CD4-positive, alpha-beta memory T cell (primary cell): ENCODE measurements at regions of chr1 and their contacts with region 1.

Region 1: DNA sequence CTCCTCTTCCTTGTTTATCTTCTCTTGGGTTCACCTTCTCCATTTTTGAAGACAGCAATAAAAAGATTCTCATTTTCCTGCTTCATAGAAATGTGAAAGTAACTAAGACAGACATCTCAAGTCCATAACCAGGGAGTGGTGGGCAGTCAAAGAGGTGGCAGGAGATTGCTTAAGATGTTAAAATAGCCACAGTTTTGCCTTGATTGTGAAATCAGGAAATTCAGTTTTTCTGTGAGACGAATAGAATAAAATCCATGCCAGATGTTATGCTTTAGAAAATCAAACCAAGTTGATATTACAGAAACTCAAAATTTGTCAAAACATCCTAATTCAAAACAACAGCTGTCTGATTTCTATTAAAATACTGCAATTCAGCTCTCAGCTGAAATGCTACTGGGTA is 57.2 kb downstream of the TNN start:
- DNase-seq: no peak
- H3K4me3 ChIP-seq: no peak overlapping the region
- H3K4me3 Mint-ChIP-seq: no peak overlapping the region
- H3K27ac ChIP-seq: no peak overlapping the region
- H3K27ac Mint-ChIP-seq: no peak overlapping the region
- H3K4me1 ChIP-seq: no peaks in the 10 kb centered on the region
- H3K4me1 Mint-ChIP-seq: no peaks in the 10 kb centered on the region
- H3K27me3 ChIP-seq: no peaks in the 10 kb centered on the region
- H3K27me3 Mint-ChIP-seq: peaks cover 0 to 2% of the 10 kb centered on the region in 2 donors

Region 2: GRCh38 chr1:174726167-174726879 is 398.5 kb before region 1 on chr1:
- CTCF ChIA-PET with region 1: no interaction called
- POLR2A ChIA-PET with region 1: no interaction called
- intact Hi-C with region 1: no loop called
- DNase-seq: peak in 1 of 5 donors; percentile 3
- H3K4me3 ChIP-seq: no peak overlapping the region
- H3K4me3 Mint-ChIP-seq: no peak overlapping the region
- H3K27ac ChIP-seq: no peak overlapping the region
- H3K27ac Mint-ChIP-seq: peak overlapping the region in 1 of 7 donors; percentile 57
- H3K4me1 ChIP-seq: no peaks in the 10 kb centered on the region
- H3K4me1 Mint-ChIP-seq: peaks cover 0 to 5% (median 0%) of the 10 kb centered on the region in 4 donors
- H3K27me3 ChIP-seq: no peaks in the 10 kb centered on the region
- H3K27me3 Mint-ChIP-seq: no peaks in the 10 kb centered on the region

Region 3: GRCh38 chr1:175023043-175023921 is 101.6 kb before region 1 on chr1 and contains the start of gene MRPS14:
- CTCF ChIA-PET with region 1: interaction called, 10 read pairs
- POLR2A ChIA-PET with region 1: interaction called, 3 read pairs
- intact Hi-C with region 1: no loop called
- DNase-seq: peak; percentile 95 to 98 (median 97)
- H3K4me3 ChIP-seq: peak within 1 kb of the TSS; percentile 79 to 97
- H3K4me3 Mint-ChIP-seq: peak within 1 kb of the TSS; percentile 90 to 98 (median 93)
- H3K27ac ChIP-seq: peak within 1 kb of the TSS; percentile 94
- H3K27ac Mint-ChIP-seq: peak within 1 kb of the TSS; percentile 86 to 97 (median 97)
- H3K4me1 ChIP-seq: peaks cover 25% of the 10 kb centered on the region
- H3K4me1 Mint-ChIP-seq: peaks cover 24 to 43% (median 28%) of the 10 kb centered on the region in 4 donors
- H3K27me3 ChIP-seq: no peaks in the 10 kb centered on the region
- H3K27me3 Mint-ChIP-seq: no peaks in the 10 kb centered on the region
- total RNA-seq, gene MRPS14: 39.3 to 40.6 TPM

Region 4: GRCh38 chr1:175035865-175036264 is 89.0 kb before region 1 on chr1:
- CTCF ChIA-PET with region 1: interaction called, 35 read pairs
- POLR2A ChIA-PET with region 1: interaction called, 5 read pairs
- intact Hi-C with region 1: no loop called
- DNase-seq: no peak
- H3K4me3 ChIP-seq: no peak overlapping the region
- H3K4me3 Mint-ChIP-seq: no peak overlapping the region
- H3K27ac ChIP-seq: no peak overlapping the region
- H3K27ac Mint-ChIP-seq: no peak overlapping the region
- H3K4me1 ChIP-seq: no peaks in the 10 kb centered on the region
- H3K4me1 Mint-ChIP-seq: no peaks in the 10 kb centered on the region
- H3K27me3 ChIP-seq: no peaks in the 10 kb centered on the region
- H3K27me3 Mint-ChIP-seq: peaks cover 0 to 2% of the 10 kb centered on the region in 2 donors

Region 5: DNA sequence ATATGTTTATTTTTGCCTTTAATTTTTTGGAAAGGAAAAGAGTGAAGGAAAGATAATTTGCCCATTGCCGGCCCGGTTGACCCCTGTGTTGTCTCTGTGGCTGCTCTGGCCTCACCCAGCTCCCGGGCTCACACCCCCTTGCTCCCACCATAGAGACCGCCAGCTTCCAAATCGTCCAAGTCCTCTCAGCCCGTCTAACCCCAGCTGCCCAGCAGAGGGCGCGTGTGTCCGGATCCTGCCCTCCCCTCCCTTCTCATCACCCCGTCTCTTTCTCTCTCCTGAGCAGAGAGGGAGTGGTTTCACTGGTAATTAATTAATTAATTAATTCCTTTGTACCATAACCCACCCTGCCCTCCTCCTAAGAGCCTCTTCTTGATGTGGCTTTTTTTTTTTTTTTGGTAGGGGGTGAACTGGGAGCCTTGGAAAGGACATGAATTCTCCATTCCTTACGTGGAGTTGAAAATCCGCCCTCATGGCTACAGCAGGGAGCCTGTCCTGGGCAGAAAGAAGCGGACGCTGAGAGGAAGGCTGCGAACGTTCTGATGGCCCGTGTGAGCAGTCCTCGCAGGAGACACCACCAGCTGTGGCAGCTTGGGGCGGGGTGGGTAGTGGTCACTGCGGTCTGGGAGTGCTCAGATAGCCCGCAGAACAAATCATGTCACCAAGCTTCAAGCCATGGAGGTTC is 21.8 kb after region 1 on chr1:
- CTCF ChIA-PET with region 1: interaction called, 25 read pairs
- POLR2A ChIA-PET with region 1: no interaction called
- intact Hi-C with region 1: no loop called
- DNase-seq: peak; percentile 47 to 58 (median 54)
- H3K4me3 ChIP-seq: no peak overlapping the region
- H3K4me3 Mint-ChIP-seq: peak overlapping the region in 1 of 8 donors; percentile 22
- H3K27ac ChIP-seq: no peak overlapping the region
- H3K27ac Mint-ChIP-seq: no peak overlapping the region
- H3K4me1 ChIP-seq: peaks cover 2% of the 10 kb centered on the region
- H3K4me1 Mint-ChIP-seq: peaks cover 0 to 13% (median 7%) of the 10 kb centered on the region in 4 donors
- H3K27me3 ChIP-seq: no peaks in the 10 kb centered on the region
- H3K27me3 Mint-ChIP-seq: peaks cover 17% of the 10 kb centered on the region in 2 donors

Region 6: DNA sequence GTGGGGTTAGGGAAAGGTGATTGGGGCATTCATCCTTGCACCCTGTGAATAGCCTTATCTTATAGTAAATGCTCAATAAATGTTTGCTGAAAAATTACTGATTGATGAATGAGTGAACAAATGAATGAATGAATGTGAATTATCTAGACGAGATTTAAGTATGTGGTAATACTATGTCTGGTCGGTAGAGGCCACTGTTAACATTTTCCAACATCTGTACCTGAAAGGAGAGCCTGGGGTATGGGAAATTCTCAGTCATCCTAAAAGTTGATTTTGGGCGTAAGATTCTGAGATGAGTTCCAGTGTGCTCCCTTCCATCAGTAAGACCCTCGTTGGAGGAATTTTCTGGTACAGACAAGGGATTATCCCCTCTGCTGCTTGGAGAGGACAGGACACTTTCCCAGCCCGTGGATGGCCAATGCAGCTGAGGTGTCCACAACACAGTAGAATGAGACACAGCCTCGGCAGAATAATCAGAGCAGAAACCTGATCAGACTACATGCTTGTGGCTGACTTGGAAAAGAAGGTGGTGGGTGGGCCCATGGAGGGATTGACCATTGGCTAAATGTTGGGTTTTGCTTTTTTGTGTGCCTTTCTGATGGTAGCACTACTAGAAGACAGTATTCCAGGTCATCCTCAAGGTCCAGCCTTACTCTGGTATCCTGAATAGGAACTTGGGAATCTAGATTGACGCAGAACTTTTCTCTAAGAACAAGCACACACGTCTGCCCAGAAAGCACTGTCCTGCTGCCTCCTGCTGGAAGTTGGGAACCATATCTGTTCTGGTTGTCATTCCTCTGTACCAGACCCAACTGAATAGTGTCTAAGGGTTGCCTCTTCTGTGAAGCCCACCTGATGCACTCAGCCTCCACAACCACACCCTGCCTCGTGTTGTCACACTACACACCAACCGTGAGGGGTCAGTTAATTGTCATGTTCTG is 356.5 kb after region 1 on chr1:
- CTCF ChIA-PET with region 1: no interaction called
- POLR2A ChIA-PET with region 1: no interaction called
- intact Hi-C with region 1: no loop called
- DNase-seq: peak in 2 of 5 donors; percentile 1 to 16
- H3K4me3 ChIP-seq: no peak overlapping the region
- H3K4me3 Mint-ChIP-seq: no peak overlapping the region
- H3K27ac ChIP-seq: no peak overlapping the region
- H3K27ac Mint-ChIP-seq: no peak overlapping the region
- H3K4me1 ChIP-seq: no peaks in the 10 kb centered on the region
- H3K4me1 Mint-ChIP-seq: peaks cover 0 to 4% (median 0%) of the 10 kb centered on the region in 4 donors
- H3K27me3 ChIP-seq: peaks cover 3% of the 10 kb centered on the region
- H3K27me3 Mint-ChIP-seq: peaks cover 7 to 12% of the 10 kb centered on the region in 2 donors